ENCODE measurements at regions of chr3 and their contacts with region 1.

Region 1: DNA sequence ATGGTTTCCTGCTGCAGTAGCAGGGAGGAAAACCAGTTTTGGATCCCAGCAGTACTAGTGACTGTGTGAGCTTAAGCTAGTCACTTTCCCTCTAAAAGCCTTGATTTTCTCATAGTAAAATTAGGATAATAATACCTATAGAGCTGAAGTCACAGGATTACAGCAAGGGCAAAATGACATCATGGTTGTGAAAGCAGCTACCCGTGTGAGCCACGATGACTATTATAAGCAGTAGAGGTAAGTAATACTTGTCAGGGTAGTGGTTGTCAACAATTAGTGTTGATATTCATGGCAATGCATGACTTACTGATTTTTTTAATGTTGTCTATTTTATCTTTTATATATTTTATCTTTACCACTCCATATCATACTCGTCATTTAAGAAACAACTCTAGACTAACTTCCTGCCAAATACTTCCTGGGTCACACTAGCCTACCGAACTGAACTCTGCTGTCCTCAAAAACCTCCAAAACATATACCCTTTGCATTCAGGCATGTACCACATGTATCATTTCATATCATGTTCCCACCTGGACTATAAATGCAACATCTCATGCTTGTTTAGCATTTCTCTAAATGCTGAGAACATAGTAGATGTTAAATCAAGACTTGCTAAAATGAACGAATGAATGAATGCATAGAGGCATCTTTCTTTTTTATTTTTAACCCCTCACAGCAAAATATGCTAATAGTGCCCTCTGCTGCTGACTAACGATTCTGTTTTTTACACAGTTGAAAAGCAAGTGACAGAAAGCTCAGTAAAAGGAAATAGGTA is 172.6 kb downstream of the P3H2 start:
- DNase-seq: peak; percentile 73
- H3K4me3 Mint-ChIP-seq: no peak overlapping the region
- H3K27ac Mint-ChIP-seq: peak overlapping the region; percentile 74
- H3K4me1 Mint-ChIP-seq: peaks cover 26% of the 10 kb centered on the region
- H3K27me3 Mint-ChIP-seq: no peaks in the 10 kb centered on the region
- CTCF ChIP-seq: peak; percentile 76

Region 2: GRCh38 chr3:189233225-189233858 is 714.8 kb before region 1 on chr3:
- CTCF ChIA-PET with region 1: no interaction called
- POLR2A ChIA-PET with region 1: no interaction called
- intact Hi-C with region 1: loop called (anchors 1 kb)
- DNase-seq: peak; percentile 78
- H3K4me3 Mint-ChIP-seq: no peak overlapping the region
- H3K27ac Mint-ChIP-seq: no peak overlapping the region
- H3K4me1 Mint-ChIP-seq: no peaks in the 10 kb centered on the region
- H3K27me3 Mint-ChIP-seq: no peaks in the 10 kb centered on the region
- CTCF ChIP-seq: peak; percentile 67

Region 3: GRCh38 chr3:189602471-189602870 is 345.7 kb before region 1 on chr3:
- CTCF ChIA-PET with region 1: no interaction called
- POLR2A ChIA-PET with region 1: no interaction called
- intact Hi-C with region 1: no loop called
- DNase-seq: no peak
- H3K4me3 Mint-ChIP-seq: no peak overlapping the region
- H3K27ac Mint-ChIP-seq: no peak overlapping the region
- H3K4me1 Mint-ChIP-seq: no peaks in the 10 kb centered on the region
- H3K27me3 Mint-ChIP-seq: no peaks in the 10 kb centered on the region
- CTCF ChIP-seq: no peak

Region 4: DNA sequence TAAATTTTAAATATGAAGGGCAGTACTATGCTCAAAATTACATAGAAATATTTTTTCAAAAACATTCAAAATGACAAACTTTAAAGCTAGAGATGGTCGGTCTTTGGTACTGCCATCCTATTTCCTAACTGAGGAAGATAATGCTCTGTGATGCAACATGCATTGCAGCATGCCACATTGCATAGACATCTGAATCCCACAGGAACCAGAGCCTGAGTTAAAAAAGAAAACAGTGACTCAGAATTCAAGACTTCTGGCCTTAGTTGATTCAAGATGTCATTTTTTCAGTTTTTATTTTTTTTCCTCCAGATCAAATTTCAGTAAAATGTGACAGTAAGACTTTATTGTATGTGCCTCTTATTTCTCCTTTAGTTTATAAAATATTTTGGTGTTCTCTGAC is 283.8 kb before region 1 on chr3:
- CTCF ChIA-PET with region 1: interaction called, 6 read pairs
- POLR2A ChIA-PET with region 1: no interaction called
- intact Hi-C with region 1: loop called (anchors 10 kb)
- DNase-seq: peak; percentile 91
- H3K4me3 Mint-ChIP-seq: no peak overlapping the region
- H3K27ac Mint-ChIP-seq: peak overlapping the region; percentile 70
- H3K4me1 Mint-ChIP-seq: peaks cover 16% of the 10 kb centered on the region
- H3K27me3 Mint-ChIP-seq: no peaks in the 10 kb centered on the region
- CTCF ChIP-seq: no peak

Region 5: DNA sequence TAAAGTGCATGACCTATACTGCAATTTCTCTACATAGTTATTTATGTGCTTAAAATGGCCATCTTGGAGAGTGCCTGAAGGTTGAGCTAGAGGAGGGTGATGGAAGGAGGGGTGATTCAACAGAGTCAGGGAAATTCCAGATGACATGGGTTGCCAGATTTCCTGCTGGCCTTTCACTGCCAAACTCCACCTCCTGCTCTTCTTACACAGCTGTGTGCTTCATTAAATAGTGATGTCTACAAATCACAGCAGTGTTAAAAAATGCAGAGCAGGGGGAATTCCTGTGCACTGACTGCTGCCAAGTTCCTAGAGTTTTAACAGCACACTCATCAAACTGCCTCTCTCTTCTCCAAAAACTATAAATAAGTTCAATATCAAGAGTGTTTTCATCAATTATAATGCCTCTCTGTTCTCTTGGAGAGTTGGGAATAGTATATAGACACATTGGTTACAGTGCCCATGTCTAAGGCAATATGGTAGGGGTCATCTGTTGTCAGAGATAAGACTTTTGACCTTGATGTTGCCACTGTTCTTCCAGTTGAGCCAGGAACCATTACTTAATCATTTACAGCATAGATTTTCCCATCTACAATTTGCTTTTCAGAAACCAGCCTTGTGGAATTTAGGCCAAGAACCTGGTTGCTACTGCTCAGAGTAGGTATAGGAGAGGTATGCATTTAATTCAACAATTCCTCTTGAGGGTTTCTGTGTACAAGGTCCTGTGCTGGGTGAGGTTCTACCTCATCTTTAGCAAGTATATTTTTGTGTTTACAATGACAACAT is 237.3 kb before region 1 on chr3:
- CTCF ChIA-PET with region 1: no interaction called
- POLR2A ChIA-PET with region 1: no interaction called
- intact Hi-C with region 1: loop called (anchors 1 kb)
- DNase-seq: peak; percentile 95
- H3K4me3 Mint-ChIP-seq: no peak overlapping the region
- H3K27ac Mint-ChIP-seq: peak overlapping the region; percentile 35
- H3K4me1 Mint-ChIP-seq: peaks cover 31% of the 10 kb centered on the region
- H3K27me3 Mint-ChIP-seq: no peaks in the 10 kb centered on the region
- CTCF ChIP-seq: no peak

Region 6: GRCh38 chr3:189786479-189787064 is 161.6 kb before region 1 on chr3:
- CTCF ChIA-PET with region 1: no interaction called
- POLR2A ChIA-PET with region 1: no interaction called
- intact Hi-C with region 1: loop called (anchors 1 kb)
- DNase-seq: no peak
- H3K4me3 Mint-ChIP-seq: no peak overlapping the region
- H3K27ac Mint-ChIP-seq: no peak overlapping the region
- H3K4me1 Mint-ChIP-seq: peaks cover 5% of the 10 kb centered on the region
- H3K27me3 Mint-ChIP-seq: no peaks in the 10 kb centered on the region
- CTCF ChIP-seq: peak; percentile 20

Region 7: DNA sequence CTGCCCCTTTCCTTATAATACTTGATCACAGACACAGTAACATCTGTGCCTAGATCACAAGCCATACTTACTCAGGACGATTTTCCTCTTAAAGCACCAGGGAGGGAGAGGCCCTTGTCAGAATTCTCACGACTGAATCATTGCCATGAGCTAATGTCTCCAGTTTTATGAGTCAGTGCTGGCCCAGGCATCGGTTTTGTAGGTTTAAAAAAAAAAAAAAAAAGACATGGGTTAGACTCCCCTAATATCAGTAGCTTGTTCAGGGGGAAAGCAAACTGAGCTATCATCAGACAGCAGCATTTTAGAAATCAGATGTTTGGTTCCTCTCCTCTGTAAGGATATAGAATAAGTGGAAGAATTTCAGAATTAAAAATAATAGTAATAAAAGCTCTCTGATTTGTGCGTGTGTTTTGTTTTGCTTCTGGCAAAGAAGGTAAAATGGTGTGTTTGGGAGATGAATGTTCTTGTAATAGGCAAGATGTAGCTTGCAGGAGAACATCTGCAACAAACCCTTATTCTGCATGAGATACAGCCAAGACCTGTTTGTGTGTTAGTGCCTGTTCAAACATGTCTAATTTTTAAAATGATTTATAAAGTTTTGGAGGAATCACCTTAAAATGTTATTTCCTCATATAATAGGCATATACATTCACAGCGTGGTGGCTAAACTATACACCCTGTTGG is 123.4 kb before region 1 on chr3:
- CTCF ChIA-PET with region 1: interaction called, 4 read pairs
- POLR2A ChIA-PET with region 1: interaction called, 9 read pairs
- intact Hi-C with region 1: loop called (anchors 2 kb)
- DNase-seq: peak; percentile 96
- H3K4me3 Mint-ChIP-seq: peak overlapping the region; percentile 42
- H3K27ac Mint-ChIP-seq: peak overlapping the region; percentile 83
- H3K4me1 Mint-ChIP-seq: peaks cover 31% of the 10 kb centered on the region
- H3K27me3 Mint-ChIP-seq: no peaks in the 10 kb centered on the region
- CTCF ChIP-seq: no peak

Region 8: GRCh38 chr3:189981668-189982067 is 33.5 kb after region 1 on chr3:
- CTCF ChIA-PET with region 1: no interaction called
- POLR2A ChIA-PET with region 1: no interaction called
- intact Hi-C with region 1: no loop called
- DNase-seq: peak; percentile 88
- H3K4me3 Mint-ChIP-seq: no peak overlapping the region
- H3K27ac Mint-ChIP-seq: peak overlapping the region; percentile 16
- H3K4me1 Mint-ChIP-seq: peaks cover 14% of the 10 kb centered on the region
- H3K27me3 Mint-ChIP-seq: no peaks in the 10 kb centered on the region
- CTCF ChIP-seq: no peak

Region 9: GRCh38 chr3:190053919-190054672 is 106.0 kb after region 1 on chr3:
- CTCF ChIA-PET with region 1: no interaction called
- POLR2A ChIA-PET with region 1: no interaction called
- intact Hi-C with region 1: no loop called
- DNase-seq: peak; percentile 42
- H3K4me3 Mint-ChIP-seq: no peak overlapping the region
- H3K27ac Mint-ChIP-seq: peak overlapping the region; percentile 75
- H3K4me1 Mint-ChIP-seq: peaks cover 28% of the 10 kb centered on the region
- H3K27me3 Mint-ChIP-seq: no peaks in the 10 kb centered on the region
- CTCF ChIP-seq: peak; percentile 21

Region 10: GRCh38 chr3:190064112-190064511 is 116.0 kb after region 1 on chr3:
- CTCF ChIA-PET with region 1: no interaction called
- POLR2A ChIA-PET with region 1: no interaction called
- intact Hi-C with region 1: no loop called
- DNase-seq: peak; percentile 85
- H3K4me3 Mint-ChIP-seq: no peak overlapping the region
- H3K27ac Mint-ChIP-seq: peak overlapping the region; percentile 79
- H3K4me1 Mint-ChIP-seq: no peaks in the 10 kb centered on the region
- H3K27me3 Mint-ChIP-seq: no peaks in the 10 kb centered on the region
- CTCF ChIP-seq: no peak

Measured in MCF 10A (cell line).